ENCODE measurements at regions of chr10 and their contacts with region 1.

Region 1: GRCh38 chr10:84352251-84352842 is 24.0 kb downstream of the CCSER2 start:
- DNase-seq: peak; percentile 66
- CTCF ChIP-seq: peak; percentile 90

Region 2: GRCh38 chr10:84317174-84317573 is 35.2 kb before region 1 on chr10:
- CTCF ChIA-PET with region 1: no interaction called
- POLR2A ChIA-PET with region 1: no interaction called
- DNase-seq: peak; percentile 34
- CTCF ChIP-seq: no peak

Region 3: DNA sequence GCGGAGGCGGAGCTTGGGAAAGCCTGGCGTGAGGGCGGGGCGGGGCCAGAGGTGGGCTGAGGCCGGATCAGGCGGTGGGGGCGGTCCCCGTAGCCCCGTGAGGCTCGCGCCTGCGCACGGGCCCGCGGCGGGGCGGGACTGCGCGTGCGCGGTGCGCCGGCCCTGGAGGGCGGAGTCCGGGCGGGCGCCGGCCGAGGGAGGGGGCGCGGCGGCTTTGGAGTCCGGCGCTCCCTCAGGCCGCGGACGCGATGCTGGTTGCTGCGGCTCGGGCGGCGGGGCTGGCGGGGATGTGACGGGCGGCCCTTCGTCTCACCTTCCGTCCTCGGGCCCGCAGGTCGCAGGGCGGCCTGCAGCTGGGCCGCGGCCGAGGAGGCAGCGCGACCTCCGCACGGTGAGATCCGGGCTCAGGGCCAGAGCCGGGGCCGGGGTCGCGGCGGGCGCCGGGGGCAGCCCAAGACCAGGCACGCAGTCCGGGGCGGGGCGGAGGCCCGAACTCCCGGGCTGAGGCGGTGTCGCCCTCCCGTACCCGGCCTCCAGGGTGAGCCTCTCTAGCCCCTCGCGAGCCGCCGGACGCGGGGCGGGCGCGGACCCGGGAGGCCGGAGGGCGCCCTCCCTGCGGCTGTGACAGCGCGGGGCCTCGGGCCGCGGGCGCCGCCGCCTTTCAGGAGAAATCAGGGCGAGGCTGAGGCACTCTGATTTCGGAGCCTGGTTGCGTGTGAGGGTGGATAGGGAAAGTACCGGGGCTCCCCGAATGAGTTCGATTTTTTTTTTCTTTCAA is 23.7 kb before region 1 on chr10 and contains the start of gene CCSER2:
- CTCF ChIA-PET with region 1: interaction called, 26 read pairs
- POLR2A ChIA-PET with region 1: no interaction called
- DNase-seq: peak; percentile 99
- CTCF ChIP-seq: no peak

Region 4: DNA sequence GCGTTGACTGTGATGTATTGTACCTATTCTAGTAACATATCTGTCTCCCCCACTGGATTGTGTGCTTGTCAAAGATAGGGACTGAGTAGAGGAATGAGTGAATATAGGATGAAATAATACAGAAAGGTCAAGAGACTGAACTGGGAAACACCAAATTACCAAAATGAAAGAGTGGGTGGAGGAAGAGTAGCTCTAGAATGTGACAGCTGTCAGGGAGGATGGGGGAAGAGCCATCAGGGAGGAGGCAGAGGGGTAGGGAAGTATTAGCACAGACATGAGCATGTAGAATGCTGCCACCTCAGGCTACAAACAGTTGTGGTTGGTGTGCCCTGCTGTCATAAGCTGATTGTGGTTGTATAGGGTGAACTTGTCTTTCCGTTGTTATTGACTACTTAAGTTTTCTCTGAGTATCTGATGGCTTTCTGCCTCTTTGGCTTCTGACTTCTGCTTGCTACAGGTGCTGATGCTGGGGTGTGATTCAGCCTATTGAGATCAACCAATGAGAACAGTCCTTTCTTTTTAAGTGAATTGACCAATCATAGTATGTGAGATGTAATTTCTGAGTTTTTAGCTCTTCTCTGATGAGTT is 18.4 kb before region 1 on chr10:
- CTCF ChIA-PET with region 1: interaction called, 26 read pairs
- POLR2A ChIA-PET with region 1: no interaction called
- DNase-seq: peak; percentile 32
- CTCF ChIP-seq: no peak

Region 5: DNA sequence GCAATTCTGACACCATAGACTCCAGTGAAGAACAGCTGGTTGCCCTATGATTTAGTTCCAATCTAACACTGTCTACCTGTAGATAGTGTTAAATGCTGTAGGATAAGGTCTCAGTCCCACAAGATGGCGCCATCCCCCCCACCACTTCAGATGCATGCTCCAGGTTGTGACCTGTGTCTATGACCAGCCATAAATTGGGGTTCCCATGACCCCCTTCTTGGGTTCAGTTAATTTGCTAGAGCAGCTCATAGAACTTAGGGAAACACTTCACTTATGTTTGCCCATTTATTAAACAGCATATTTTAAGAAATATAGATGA is 10.8 kb before region 1 on chr10:
- CTCF ChIA-PET with region 1: interaction called, 41 read pairs
- POLR2A ChIA-PET with region 1: interaction called, 5 read pairs
- DNase-seq: no peak
- CTCF ChIP-seq: no peak

Region 6: GRCh38 chr10:84440781-84441180 is 88.4 kb after region 1 on chr10:
- CTCF ChIA-PET with region 1: no interaction called
- POLR2A ChIA-PET with region 1: no interaction called
- DNase-seq: no peak
- CTCF ChIP-seq: no peak